Heart left ventricle (tissue), 16 donors: ENCODE measurements at regions of chr20 and their contacts with region 1.

Region 1: DNA sequence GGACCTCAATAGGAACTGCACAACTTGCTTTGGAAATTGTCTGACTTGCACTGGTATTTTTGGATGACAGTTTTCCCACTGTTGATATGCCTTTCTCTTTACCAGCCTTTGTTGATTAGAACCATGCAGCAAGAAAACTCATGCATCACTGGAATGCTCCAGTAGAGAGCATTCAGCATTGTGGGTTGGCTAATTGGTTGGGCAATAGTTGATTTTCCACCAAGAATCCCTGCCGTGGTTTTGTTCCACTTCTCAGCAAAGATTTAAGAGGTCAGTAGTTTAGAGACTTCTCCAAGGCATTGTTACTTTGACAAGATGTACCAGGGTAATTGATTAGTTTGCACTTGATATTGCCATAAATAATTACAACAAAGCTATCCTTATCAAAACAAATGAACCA is 260.0 kb downstream of the DHX35 start:
- DNase-seq: no peak
- ATAC-seq: no peak
- H3K4me3 ChIP-seq: no peak overlapping the region
- H3K27ac ChIP-seq: no peak overlapping the region
- H3K4me1 ChIP-seq: no peaks in the 10 kb centered on the region
- H3K27me3 ChIP-seq: peaks cover 0 to 12% (median 0%) of the 10 kb centered on the region in 9 donors
- CTCF ChIP-seq: no peak
- POLR2A ChIP-seq: no peak

Region 2: DNA sequence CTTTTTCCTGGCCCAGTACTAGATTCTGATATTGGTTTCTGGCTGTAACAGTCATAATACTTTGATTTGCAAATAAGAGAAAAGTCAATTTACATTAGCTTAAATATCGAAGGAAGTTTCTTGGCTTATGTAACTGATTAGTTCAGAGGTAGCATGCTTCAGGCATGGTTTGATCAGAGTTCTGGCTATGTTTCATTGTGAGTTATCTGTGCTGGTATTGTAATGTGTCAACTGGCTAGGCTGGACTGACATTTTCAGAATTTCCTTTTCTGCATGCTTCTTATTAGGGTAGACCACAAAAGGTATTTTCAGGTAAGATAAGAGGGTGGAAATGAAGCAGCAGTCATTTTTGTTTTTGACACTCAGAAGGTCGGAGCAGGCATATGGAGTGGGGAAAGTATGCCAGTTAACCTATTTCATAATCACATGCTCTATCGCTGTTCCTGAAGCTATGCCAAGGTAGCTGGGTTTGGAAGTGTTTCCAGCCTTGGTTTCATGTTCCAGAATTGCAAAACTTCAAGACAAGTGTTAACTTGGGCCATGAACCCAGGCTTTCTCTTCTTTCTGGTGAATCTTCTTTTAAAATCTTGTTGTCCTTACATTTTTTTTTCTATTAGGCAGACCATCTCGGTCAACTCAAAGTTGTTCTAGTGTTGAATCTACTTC is 15.1 kb before region 1 on chr20:
- intact Hi-C with region 1: loop called in 1 of 10 experiments (anchors 2 kb)
- DNase-seq: no peak
- ATAC-seq: no peak
- H3K4me3 ChIP-seq: no peak overlapping the region
- H3K27ac ChIP-seq: no peak overlapping the region
- H3K4me1 ChIP-seq: peaks cover 0 to 4% (median 0%) of the 10 kb centered on the region in 12 donors
- H3K27me3 ChIP-seq: no peaks in the 10 kb centered on the region
- CTCF ChIP-seq: no peak
- POLR2A ChIP-seq: no peak